ENCODE measurements at regions of chr10 and their contacts with region 1.

Region 1: DNA sequence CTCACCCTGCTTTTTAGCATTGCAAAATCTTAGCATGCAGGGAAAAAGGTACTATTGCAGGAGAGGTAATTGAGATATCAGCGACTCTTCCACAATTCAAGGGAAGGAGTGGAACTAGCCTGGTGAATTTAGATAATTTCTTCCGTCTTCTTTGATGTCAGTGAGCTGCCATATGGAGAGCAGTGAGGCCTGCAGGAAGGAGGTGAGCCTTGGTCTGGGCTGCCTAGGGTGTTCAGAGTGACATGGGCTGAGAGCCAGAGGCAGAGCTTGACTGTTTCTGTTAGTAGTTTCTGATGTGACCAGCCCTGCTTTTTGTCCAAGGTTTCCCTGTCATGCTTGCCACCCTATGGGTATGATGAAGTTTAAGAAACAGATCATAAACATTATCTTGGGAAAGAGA is 28.6 kb downstream of the KAT6B start:
- DNase-seq: peak; percentile 19
- ATAC-seq: peak; percentile 40
- H3K4me3 Mint-ChIP-seq: peak overlapping the region; percentile 42
- H3K27ac Mint-ChIP-seq: peak overlapping the region; percentile 84
- H3K4me1 Mint-ChIP-seq: peaks cover 44% of the 10 kb centered on the region
- H3K27me3 Mint-ChIP-seq: no peaks in the 10 kb centered on the region

Region 2: DNA sequence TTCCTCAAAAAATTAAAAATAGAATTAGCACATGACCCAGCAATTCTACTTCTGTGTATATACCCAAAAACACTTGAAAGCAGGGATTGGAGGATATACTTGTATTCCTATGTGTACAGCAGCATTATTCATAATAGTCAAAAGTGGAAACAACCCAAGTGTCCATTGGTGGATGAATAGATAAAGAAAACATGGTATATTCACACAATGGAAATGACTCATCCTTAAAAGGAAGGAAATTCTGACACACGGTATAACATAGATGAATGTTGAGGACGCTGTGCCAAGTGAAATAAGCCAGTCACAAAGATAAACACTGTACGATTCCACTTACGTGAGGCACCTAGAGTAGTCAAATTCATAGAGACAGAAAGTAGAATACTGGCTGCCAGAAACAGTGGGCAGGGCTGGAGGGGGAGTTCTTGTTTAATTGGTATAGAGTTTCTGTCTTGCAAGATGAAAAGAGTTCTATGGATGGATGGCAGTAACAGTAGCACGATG is 55.3 kb before region 1 on chr10:
- CTCF ChIA-PET with region 1: no interaction called
- POLR2A ChIA-PET with region 1: no interaction called
- intact Hi-C with region 1: loop called in 1 of 2 experiments (anchors 1 kb)
- DNase-seq: peak; percentile 71
- ATAC-seq: peak; percentile 99
- H3K4me3 Mint-ChIP-seq: no peak overlapping the region
- H3K27ac Mint-ChIP-seq: peak overlapping the region; percentile 24
- H3K4me1 Mint-ChIP-seq: peaks cover 11% of the 10 kb centered on the region
- H3K27me3 Mint-ChIP-seq: no peaks in the 10 kb centered on the region

Region 3: DNA sequence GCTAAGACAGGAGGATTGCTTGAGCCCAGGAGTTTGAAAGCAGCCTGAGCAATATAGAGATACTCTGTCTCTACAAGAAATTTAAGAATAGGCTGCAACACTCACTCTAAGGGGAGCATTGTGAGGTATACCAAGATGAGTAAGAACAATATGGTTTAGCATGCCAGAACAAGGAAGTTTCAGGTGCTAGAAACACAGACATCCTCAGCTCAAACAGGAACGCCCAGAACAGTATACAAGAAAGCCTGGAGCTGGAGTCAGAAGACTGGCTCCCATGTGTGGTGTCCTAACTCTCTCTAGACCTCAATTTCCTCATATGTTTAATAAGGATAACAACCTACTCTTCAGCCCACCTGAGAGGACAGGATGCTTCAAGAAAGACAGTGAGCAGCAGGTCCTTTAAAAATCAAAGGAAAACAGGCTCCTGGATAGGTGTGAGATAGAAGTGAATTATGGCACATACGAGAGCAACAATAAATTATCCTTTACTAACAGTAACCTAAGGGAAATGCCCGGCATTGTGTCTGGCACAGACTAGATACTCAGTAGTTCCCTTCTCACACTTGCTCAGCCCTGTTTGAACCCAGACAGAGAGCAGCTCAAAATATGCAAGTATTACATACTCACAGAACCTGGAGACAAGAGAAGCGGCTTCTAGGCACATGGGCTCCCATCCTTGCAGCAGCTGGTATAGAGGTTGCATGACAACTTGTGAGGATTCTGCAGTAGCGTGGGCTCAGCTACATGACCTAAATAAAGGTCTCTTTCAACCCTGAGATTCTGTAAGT is 16.8 kb after region 1 on chr10:
- CTCF ChIA-PET with region 1: interaction called, 10 read pairs
- POLR2A ChIA-PET with region 1: interaction called, 6 read pairs
- intact Hi-C with region 1: loop called in 1 of 2 experiments (anchors 1 kb)
- DNase-seq: peak; percentile 48
- ATAC-seq: peak; percentile 93
- H3K4me3 Mint-ChIP-seq: peak overlapping the region; percentile 64
- H3K27ac Mint-ChIP-seq: peak overlapping the region; percentile 71
- H3K4me1 Mint-ChIP-seq: peaks cover 63% of the 10 kb centered on the region
- H3K27me3 Mint-ChIP-seq: no peaks in the 10 kb centered on the region

Region 4: GRCh38 chr10:74898201-74898976 is 43.4 kb after region 1 on chr10:
- CTCF ChIA-PET with region 1: no interaction called
- POLR2A ChIA-PET with region 1: no interaction called
- intact Hi-C with region 1: loop called in 1 of 2 experiments (anchors 2 kb)
- DNase-seq: peak; percentile 56
- ATAC-seq: peak; percentile 92
- H3K4me3 Mint-ChIP-seq: peak overlapping the region; percentile 39
- H3K27ac Mint-ChIP-seq: peak overlapping the region; percentile 82
- H3K4me1 Mint-ChIP-seq: peaks cover 62% of the 10 kb centered on the region
- H3K27me3 Mint-ChIP-seq: no peaks in the 10 kb centered on the region

Measured in activated CD4-positive, alpha-beta T cell treated with anti-CD3 and anti-CD28 coated beads for 36 hours (primary cell).